ENCODE measurements at regions of chr9 and their contacts with region 1.

Region 1: DNA sequence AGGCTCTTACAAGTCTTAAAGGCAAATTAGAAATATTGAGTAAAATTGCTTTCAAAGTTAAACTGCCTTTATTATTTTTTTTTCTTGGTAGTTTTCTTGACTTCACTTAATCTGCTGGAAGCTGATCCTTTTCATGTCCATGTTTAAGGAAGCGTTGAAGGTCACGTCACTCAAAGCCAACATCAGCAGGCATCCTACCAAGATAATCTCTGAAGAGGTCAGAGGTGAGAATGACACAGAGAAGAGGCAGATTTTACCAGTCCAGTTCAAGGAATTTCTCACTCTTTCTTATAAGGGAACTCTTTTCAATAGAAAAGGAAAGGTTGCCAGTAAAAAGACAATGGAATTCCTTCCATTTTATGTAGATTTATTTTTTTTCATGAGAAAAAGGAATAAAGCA is 259.8 kb downstream of the ANXA1 start:
- DNase-seq: no peak
- H3K4me3 ChIP-seq: no peak overlapping the region
- H3K27ac ChIP-seq: no peak overlapping the region
- H3K4me1 ChIP-seq: no peaks in the 10 kb centered on the region
- H3K27me3 ChIP-seq: peaks cover 40% of the 10 kb centered on the region
- CTCF ChIP-seq: no peak

Region 2: GRCh38 chr9:73357607-73358006 is 53.9 kb before region 1 on chr9:
- CTCF ChIA-PET with region 1: no interaction called
- POLR2A ChIA-PET with region 1: no interaction called
- intact Hi-C with region 1: loop called (anchors 10 kb)
- DNase-seq: no peak
- H3K4me3 ChIP-seq: no peak overlapping the region
- H3K27ac ChIP-seq: no peak overlapping the region
- H3K4me1 ChIP-seq: no peaks in the 10 kb centered on the region
- H3K27me3 ChIP-seq: peaks cover 34% of the 10 kb centered on the region
- CTCF ChIP-seq: no peak

Region 3: GRCh38 chr9:73468716-73469115 is 57.2 kb after region 1 on chr9:
- CTCF ChIA-PET with region 1: no interaction called
- POLR2A ChIA-PET with region 1: no interaction called
- intact Hi-C with region 1: no loop called
- DNase-seq: no peak
- H3K4me3 ChIP-seq: no peak overlapping the region
- H3K27ac ChIP-seq: no peak overlapping the region
- H3K4me1 ChIP-seq: no peaks in the 10 kb centered on the region
- H3K27me3 ChIP-seq: no peaks in the 10 kb centered on the region
- CTCF ChIP-seq: no peak